HepG2 (cell line): ENCODE measurements at regions of chr20 and their contacts with region 1.

Region 1: GRCh38 chr20:34876162-34877001 is at the start of gene ACSS2:
- DNase-seq: peak; percentile 99
- ATAC-seq: peak; percentile 83
- H3K4me3 ChIP-seq: peak within 1 kb of the TSS; percentile 85 to 95 (median 93)
- H3K27ac ChIP-seq: peak within 1 kb of the TSS; percentile 71
- H3K4me1 ChIP-seq: peaks cover 61% of the 10 kb centered on the region
- H3K27me3 ChIP-seq: peaks cover 0 to 5% of the 10 kb centered on the region in 2 experiments; a peak in 1 of 5 replicates
- CTCF ChIP-seq: no peak
- EP300 ChIP-seq: peak in 1 of 2 experiments; percentile 49; a peak in 2 of 4 replicates
- POLR2A ChIP-seq: peak; percentile 61 to 88
- RAD21 ChIP-seq: peak; percentile 65
- total RNA-seq, gene ACSS2: 89.7 and 91.7 TPM in 2 replicates

Region 2: DNA sequence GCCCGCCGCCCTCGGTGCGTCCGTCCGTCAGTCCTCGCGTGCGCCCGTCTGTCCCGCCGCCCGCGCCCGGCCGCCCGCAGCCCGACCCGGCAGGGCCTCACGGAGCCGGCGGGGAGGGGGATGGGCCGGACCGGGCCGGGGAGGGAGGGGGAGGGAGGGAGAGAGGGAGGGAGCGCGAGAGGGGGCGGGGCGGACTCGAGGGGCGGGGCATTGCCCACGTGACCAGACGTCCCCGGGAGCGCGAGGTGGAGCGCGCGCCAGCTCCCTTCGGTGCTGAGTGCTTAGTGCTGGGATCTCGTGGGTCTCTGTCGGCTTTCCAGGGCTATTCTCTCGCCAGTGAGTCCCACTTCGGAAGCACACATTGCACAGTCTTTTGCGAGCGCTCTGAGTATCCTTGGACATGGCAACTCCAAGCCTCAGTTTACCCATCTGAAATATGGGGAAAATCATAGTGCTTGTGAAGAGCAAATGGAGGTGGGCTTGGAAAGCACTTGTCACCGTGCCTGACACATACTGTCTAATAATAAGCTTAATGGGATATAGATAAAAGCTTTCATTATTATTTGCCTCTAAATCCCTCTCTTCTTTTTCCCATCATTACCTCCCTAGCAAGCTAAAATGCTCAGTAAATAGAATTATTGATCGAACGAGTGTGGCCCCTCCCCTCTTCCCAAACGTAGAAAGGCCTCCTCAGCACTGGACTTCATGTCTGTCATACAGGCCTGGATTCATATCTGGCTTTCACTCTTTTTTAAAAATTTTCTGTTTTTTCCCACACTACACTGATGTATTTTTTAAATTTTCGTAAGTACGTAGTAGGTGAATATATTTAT is 50.6 kb before region 1 on chr20 and contains the start of gene NCOA6:
- CTCF ChIA-PET with region 1: no interaction called
- POLR2A ChIA-PET with region 1: interaction called, 14 read pairs
- in situ Hi-C with region 1: no loop called
- intact Hi-C with region 1: no loop called
- DNase-seq: peak; percentile 76
- ATAC-seq: peak; percentile 69
- H3K4me3 ChIP-seq: peak within 1 kb of the TSS; percentile 87 to 100 (median 92)
- H3K27ac ChIP-seq: peak within 1 kb of the TSS; percentile 79
- H3K4me1 ChIP-seq: peaks cover 44% of the 10 kb centered on the region
- H3K27me3 ChIP-seq: peaks cover 1 to 3% of the 10 kb centered on the region in 2 experiments; a peak in 1 of 5 replicates
- CTCF ChIP-seq: no peak
- EP300 ChIP-seq: no peak
- POLR2A ChIP-seq: peak; percentile 77 to 98
- RAD21 ChIP-seq: 0 out of 2 replicates have a peak, but pooled peaks have one; percentile 2
- total RNA-seq, gene NCOA6: 11.2 and 27.2 TPM in 2 replicates

Region 3: DNA sequence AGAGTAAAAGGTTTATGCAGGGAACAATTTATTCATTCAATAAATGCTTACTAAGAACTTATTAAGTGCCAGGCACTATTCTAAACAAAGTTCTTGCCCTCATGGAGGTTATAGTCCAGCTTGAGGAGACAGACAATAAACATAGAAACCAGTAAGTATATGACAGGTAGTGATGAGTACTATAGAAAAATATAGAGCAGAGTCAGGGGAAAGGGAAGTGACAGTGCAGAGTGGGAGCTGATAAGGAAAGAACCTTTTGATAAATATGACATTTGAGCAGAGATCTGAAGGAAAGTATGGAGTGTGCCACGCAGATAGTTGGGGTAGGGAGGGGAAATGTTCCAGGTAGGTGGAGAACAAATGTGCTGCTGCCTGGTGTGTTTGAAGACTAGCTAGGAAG is 12.1 kb after region 1 on chr20:
- CTCF ChIA-PET with region 1: no interaction called
- POLR2A ChIA-PET with region 1: interaction called, 19 read pairs
- in situ Hi-C with region 1: no loop called
- intact Hi-C with region 1: no loop called
- DNase-seq: no peak
- ATAC-seq: no peak
- H3K4me3 ChIP-seq: no peak overlapping the region
- H3K27ac ChIP-seq: no peak overlapping the region
- H3K4me1 ChIP-seq: peaks cover 16% of the 10 kb centered on the region
- H3K27me3 ChIP-seq: no peaks in the 10 kb centered on the region
- CTCF ChIP-seq: no peak
- EP300 ChIP-seq: no peak
- POLR2A ChIP-seq: no peak
- RAD21 ChIP-seq: no peak

Region 4: DNA sequence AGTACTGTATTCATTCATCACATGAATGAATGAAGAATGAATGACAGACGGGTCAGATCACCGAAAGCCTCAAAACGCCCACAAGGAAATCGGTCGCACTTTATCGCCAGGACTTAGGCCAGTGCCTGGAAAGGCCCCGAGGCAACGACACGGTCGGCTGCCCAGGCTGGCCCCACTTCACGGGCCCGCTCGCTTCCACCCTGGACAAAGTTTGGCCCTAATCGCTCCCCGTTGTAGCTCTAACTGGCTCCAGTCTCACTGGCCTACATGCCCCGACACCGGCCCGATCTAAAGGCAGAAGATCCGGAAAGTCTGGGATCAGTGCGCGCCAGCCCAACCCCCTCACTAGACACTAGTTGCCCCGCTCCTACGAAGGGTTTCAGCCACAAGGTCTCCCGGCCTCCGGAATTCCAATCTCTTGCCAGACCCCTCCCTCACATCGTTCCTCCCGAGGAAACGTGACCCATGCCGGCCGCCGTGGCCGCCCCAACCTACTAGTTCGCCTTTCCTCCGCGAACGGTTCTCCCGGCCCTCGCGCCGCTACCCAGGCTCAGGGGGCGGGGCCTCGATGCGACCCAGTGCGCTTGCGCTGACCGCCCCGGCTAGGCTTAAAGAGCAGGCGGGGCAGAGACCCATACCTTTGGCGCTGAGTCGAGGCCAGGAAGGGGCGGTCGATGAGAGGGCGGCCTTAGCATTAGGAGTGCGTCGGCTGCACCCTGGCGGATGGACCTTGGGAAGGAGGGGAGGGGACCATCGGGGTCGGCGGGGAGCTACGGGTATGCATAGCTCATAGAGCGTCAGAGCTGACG is 79.1 kb after region 1 on chr20 and contains the starts of genes GSS and MYH7B:
- CTCF ChIA-PET with region 1: interaction called, 123 read pairs
- POLR2A ChIA-PET with region 1: interaction called, 126 read pairs
- in situ Hi-C with region 1: loop called (anchors 5 kb)
- intact Hi-C with region 1: loop called (anchors 1 kb)
- DNase-seq: peak; percentile 98
- ATAC-seq: peak; percentile 94
- H3K4me3 ChIP-seq: peak within 1 kb of the TSS; percentile 74 to 83 (median 82)
- H3K27ac ChIP-seq: peak within 1 kb of the TSS; percentile 72
- H3K4me1 ChIP-seq: peaks cover 41% of the 10 kb centered on the region
- H3K27me3 ChIP-seq: peaks cover 0 to 10% of the 10 kb centered on the region in 2 experiments; a peak in 2 of 5 replicates
- CTCF ChIP-seq: peak; percentile 99
- EP300 ChIP-seq: peak in 1 of 2 experiments; percentile 20; a peak in 1 of 4 replicates
- POLR2A ChIP-seq: peak; percentile 89 to 98
- RAD21 ChIP-seq: peak; percentile 75
- total RNA-seq, gene GSS: 102 and 107 TPM in 2 replicates
- total RNA-seq, gene MYH7B: 0.18 and 0.20 TPM in 2 replicates

Region 5: DNA sequence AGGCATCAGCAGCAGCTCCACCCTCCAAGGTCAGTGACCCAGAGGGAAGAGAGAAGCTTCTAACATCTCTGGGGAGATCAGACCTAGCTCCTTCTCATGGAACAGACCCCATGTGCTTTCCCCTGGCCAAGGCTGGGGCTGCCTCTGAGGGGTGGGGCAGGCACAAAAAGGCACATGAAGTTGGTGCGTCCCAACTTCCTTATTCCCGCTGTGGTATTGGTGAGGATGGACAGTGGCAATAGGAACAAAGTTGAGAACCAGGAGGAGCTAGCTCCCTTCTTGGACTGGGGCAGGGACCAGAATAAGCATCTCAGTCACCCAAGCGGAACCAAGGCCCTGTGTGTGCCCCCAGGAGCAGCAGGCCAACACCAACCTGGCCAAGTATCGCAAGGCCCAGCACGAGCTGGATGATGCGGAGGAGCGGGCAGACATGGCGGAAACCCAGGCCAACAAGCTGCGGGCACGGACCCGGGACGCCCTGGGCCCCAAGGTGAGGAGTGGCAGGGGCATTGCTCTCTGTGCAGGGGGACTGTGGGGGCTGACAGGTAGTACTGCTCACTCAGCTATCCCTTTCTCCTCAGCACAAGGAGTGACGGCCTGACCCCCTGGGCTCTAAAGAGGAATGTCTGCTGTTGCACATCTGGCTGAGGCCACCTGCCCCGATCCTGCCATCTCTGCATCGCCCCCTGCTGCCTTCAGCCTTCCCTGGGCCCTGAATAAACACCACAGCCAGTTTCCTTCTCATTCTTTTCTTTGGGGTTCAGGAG is 125.4 kb after region 1 on chr20:
- CTCF ChIA-PET with region 1: interaction called, 16 read pairs
- POLR2A ChIA-PET with region 1: interaction called, 3 read pairs
- in situ Hi-C with region 1: no loop called
- intact Hi-C with region 1: loop called (anchors 2 kb)
- DNase-seq: no peak
- ATAC-seq: peak; percentile 16
- H3K4me3 ChIP-seq: no peak overlapping the region
- H3K27ac ChIP-seq: no peak overlapping the region
- H3K4me1 ChIP-seq: peaks cover 11% of the 10 kb centered on the region
- H3K27me3 ChIP-seq: no peaks in the 10 kb centered on the region
- CTCF ChIP-seq: peak; percentile 69
- EP300 ChIP-seq: no peak
- POLR2A ChIP-seq: no peak
- RAD21 ChIP-seq: no peak

Region 6: DNA sequence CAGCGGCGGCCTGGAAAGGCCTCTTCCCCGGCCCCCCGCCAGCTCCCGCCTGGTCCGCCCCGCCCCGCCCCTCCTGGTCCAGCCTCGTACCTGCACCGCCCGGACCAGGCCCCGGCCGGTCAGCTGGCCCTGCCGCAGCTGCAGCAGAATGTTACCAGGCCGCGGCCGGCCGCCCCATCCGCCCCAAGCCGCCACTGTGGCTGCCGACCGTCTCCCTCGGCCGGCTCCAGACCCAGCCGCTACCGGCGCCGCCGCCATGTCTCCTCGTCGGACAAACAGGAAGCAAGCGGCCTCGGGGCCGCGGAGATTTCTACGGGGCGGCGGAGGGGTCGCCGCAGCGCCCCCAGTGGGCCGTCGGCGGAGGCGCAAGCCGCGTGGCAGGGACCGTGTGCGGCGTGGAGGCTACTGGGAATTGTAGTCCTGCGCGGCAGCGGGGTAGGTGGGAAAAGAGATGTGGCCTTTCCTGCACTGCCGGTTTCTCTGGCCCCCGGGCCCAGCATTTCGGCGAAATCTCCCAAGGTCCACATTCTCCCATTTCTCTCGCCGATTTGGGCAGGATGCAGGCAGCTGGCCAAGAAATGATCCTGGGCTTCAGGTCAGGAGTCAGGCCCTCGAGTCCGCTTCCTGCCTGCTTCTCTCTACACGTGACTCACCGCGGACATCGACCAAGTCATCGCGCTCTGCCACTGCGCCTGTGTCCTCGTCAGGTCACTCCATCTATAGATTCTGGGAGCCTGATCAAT is 216.3 kb after region 1 on chr20 and contains the start of gene TRPC4AP:
- CTCF ChIA-PET with region 1: interaction called, 7 read pairs
- POLR2A ChIA-PET with region 1: interaction called, 11 read pairs
- in situ Hi-C with region 1: loop called (anchors 5 kb)
- intact Hi-C with region 1: loop called (anchors 2 kb)
- DNase-seq: peak; percentile 92
- ATAC-seq: peak; percentile 92
- H3K4me3 ChIP-seq: peak within 1 kb of the TSS; percentile 82 to 99 (median 82)
- H3K27ac ChIP-seq: peak within 1 kb of the TSS; percentile 82
- H3K4me1 ChIP-seq: peaks cover 61% of the 10 kb centered on the region
- H3K27me3 ChIP-seq: peaks cover 0 to 4% of the 10 kb centered on the region in 2 experiments; a peak in 1 of 5 replicates
- CTCF ChIP-seq: peak; percentile 99
- EP300 ChIP-seq: peak in 1 of 2 experiments; percentile 66; a peak in 3 of 4 replicates
- POLR2A ChIP-seq: peak; percentile 82 to 85
- RAD21 ChIP-seq: peak; percentile 77
- total RNA-seq, gene TRPC4AP: 136 and 161 TPM in 2 replicates

Region 7: DNA sequence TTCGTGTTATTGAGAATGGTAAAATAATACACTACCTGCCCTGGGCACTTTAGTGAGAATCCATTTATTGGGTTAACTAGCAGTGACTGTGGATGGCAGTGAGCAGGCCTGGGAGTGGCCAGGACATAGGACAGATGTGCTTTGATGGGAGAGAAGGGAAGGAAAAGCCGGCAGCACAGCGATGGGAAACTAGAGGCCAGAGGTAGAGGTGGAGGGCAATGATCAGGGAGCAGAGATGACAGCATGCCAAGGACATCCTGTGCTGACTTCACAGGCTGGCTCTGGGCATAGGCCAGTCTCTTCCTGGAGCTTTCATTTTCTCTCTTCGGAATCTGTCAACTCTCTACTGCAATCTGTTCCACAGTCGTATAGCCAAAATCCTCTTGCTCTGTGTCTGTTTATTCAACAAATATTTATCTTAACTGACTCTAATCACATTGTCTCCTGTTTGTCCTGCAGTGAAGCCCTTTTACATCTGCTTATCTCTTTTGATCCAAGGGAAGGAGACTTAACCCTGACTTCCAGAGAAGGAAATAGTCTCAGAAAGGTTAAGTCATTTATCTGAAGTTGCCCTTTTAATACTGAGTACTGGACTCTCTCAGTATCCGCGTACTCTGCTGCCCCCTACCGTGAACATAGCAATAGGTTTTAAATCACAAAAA is 331.7 kb after region 1 on chr20:
- CTCF ChIA-PET with region 1: interaction called, 3 read pairs
- POLR2A ChIA-PET with region 1: no interaction called
- in situ Hi-C with region 1: no loop called
- intact Hi-C with region 1: loop called (anchors 5 kb)
- DNase-seq: peak; percentile 89
- ATAC-seq: peak; percentile 98
- H3K4me3 ChIP-seq: peak overlapping the region in 2 of 3 experiments; percentile 23 to 40; a peak in 4 of 6 replicates
- H3K27ac ChIP-seq: peak overlapping the region; percentile 46
- H3K4me1 ChIP-seq: peaks cover 18% of the 10 kb centered on the region
- H3K27me3 ChIP-seq: no peaks in the 10 kb centered on the region
- CTCF ChIP-seq: peak; percentile 97
- EP300 ChIP-seq: peak in 1 of 2 experiments; percentile 58; a peak in 1 of 4 replicates
- POLR2A ChIP-seq: no peak
- RAD21 ChIP-seq: peak; percentile 97

Region 8: DNA sequence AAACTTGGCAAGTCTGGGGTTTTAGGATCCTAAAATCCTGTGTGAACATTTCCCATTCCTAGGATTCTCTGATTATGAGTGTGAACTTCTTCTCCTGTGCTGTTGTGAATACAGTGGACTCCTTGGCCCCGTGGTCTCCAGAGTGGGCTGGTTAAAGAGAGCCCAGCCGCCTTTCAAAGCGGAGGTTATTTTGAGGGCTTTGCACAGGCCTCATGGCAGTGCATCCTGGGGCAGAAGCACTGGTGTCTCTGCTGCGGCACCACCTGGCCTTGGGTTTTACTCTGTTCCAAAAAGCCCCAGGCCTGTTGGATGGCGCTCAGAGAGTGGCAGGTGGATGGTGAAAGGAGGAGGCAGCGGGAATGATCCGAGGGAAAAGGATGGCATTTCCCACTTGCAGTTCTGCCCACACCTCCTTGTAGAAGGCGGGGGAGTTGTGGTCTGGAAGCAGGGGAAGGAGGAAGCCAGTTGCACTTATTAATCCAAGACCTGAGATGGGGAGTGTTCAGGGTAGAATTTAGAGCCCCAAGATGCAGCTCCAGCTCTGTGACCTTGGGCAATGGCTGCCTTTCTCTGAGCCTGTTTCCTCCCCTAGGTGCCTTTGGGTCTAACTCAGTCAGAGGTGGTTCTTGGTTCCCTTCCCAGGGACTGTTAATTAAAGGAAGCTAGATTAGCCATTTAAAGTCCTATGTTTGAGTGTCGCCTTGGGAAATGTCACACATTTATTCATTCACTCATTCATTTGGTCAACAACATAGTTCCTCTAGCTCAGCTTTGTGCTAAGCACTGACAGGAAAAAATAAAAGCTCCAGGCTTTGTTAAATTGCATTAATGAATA is 372.5 kb after region 1 on chr20:
- CTCF ChIA-PET with region 1: no interaction called
- POLR2A ChIA-PET with region 1: no interaction called
- in situ Hi-C with region 1: no loop called
- intact Hi-C with region 1: no loop called
- DNase-seq: no peak
- ATAC-seq: peak; percentile 41
- H3K4me3 ChIP-seq: no peak overlapping the region
- H3K27ac ChIP-seq: no peak overlapping the region
- H3K4me1 ChIP-seq: peaks cover 7% of the 10 kb centered on the region
- H3K27me3 ChIP-seq: no peaks in the 10 kb centered on the region
- CTCF ChIP-seq: no peak
- EP300 ChIP-seq: no peak
- POLR2A ChIP-seq: no peak
- RAD21 ChIP-seq: no peak